RWPE1 (cell line): ENCODE measurements at regions of chr2 and their contacts with region 1.

Region 1: GRCh38 chr2:191521608-191522208 is 156.2 kb upstream of the NABP1 start:
- DNase-seq: peak; percentile 54
- H3K27ac ChIP-seq: no peak overlapping the region
- CTCF ChIP-seq: peak; percentile 97

Region 2: DNA sequence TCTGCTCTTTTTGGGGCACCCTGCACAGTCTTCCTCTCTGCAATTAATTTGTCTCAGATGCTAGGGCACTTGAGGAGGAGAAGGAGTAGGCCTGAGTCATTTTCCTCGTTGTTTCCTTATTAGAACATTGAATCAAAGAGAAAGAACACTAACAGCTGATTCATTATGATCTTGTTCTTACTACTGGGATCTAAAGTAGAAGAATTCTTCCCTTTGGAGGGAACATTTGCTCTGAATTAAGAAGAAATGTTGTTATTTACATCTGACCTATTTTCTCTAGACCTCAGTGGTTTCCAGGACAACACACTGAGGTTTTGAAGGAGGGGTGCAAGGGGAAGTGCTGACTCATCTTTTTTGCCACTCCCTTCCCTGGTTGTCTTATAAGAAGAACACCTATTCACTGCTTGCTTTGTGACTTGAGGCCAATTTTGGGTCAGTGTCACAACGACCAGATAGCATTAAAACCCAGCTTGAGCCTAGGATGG is 483.4 kb before region 1 on chr2:
- CTCF ChIA-PET with region 1: no interaction called
- POLR2A ChIA-PET with region 1: no interaction called
- DNase-seq: peak; percentile 10
- H3K27ac ChIP-seq: no peak overlapping the region
- CTCF ChIP-seq: no peak

Region 3: DNA sequence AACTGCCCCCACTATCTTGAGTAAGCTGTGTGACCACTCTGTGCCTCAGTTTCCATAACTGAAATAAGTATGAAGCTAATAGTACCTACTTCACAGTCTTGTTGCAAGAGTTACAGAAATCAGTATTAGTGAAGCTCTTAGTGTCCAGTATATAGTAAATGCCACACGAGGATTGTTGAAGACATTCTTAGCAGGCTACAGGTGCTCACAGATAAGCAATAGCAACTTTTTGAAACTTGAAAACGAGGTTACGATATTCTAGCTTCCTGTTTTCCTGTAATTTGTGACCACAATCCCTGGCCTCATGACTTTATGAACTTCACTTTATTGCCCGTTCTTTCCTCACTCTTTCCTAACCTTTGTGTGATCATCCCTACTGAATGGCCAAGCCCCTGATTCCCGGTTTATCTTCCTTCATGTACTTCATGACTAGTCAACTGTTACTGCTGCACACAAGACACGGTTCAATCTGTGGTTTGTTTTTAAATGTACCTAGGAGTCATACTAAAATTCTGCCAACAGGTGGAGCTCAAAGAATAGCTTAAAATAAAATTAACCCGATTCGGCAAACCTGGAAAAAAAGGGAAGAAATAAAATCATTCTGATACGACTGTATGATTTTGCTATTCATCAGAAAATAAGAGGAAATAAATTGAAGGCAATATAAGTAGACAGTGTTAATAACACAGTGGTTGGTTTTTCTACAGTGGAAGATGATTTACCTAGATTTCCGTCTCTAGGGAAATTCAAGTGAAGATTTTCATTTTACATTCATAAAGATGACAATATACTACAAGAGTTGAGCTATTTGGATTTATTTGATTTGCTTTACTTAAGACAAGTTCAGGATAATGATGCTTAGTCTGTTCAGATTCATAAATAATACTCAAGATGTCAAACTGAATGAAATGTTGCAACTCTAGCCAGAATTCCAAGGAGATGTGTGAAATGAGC is 469.6 kb before region 1 on chr2:
- CTCF ChIA-PET with region 1: interaction called, 23 read pairs
- POLR2A ChIA-PET with region 1: no interaction called
- DNase-seq: peak; percentile 48
- H3K27ac ChIP-seq: no peak overlapping the region
- CTCF ChIP-seq: peak; percentile 72

Region 4: GRCh38 chr2:191165176-191165643 is 356.5 kb before region 1 on chr2:
- CTCF ChIA-PET with region 1: interaction called, 11 read pairs
- POLR2A ChIA-PET with region 1: no interaction called
- DNase-seq: peak; percentile 52
- H3K27ac ChIP-seq: no peak overlapping the region
- CTCF ChIP-seq: peak; percentile 61